Dorsolateral prefrontal cortex (tissue), 120 donors: ENCODE measurements at regions of chr19 and their contacts with region 1.

Region 1: DNA sequence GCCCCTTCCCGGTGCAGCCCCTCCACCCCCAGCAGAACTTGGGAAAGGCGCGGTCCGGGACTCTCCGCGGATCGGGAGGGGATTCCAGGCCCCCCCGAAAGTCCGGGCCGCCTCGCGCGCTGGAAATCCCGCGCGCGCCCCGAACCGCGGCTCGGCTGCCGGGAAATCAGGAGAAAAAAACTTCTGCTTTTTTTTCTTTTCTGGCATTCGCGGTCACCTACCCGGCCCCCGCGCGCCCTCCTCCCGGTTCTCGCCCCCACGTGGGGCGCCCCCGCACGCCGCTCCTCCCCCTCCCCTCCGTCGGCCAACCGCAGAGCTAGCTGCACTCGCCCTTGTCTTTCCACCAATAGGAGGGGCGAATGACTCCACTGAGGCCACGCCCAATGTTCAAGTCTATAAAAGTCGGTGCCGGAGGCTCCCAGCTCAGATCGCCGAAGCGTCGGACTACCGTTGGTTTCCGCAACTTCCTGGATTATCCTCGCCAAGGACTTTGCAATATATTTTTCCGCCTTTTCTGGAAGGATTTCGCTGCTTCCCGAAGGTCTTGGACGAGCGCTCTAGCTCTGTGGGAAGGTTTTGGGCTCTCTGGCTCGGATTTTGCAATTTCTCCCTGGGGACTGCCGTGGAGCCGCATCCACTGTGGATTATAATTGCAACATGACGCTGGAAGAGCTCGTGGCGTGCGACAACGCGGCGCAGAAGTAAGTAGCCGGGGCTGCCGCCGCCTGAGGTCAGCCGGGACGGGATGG is at the start of gene GADD45B:
- DNase-seq: peak; percentile 92 to 99 (median 97)
- H3K4me3 ChIP-seq: peak within 1 kb of the TSS; percentile 57 to 97 (median 84)
- H3K27ac ChIP-seq: peak within 1 kb of the TSS; percentile 34 to 95 (median 86)
- H3K27me3 ChIP-seq: no peaks in the 10 kb centered on the region
- CTCF ChIP-seq: peak in 12 of 56 donors; percentile 5 to 38 (median 19)
- total RNA-seq, gene GADD45B: 15.8 to 333 (median 47.4) TPM

Region 2: GRCh38 chr19:2494444-2495129 is 18.7 kb after region 1 on chr19:
- intact Hi-C with region 1: loop called in 1 of 2 experiments (anchors 2 kb)
- DNase-seq: peak in 8 of 10 donors; percentile 42 to 83 (median 72)
- H3K4me3 ChIP-seq: peak overlapping the region; percentile 33 to 85 (median 68)
- H3K27ac ChIP-seq: peak overlapping the region in 55 of 59 donors; percentile 15 to 89 (median 75)
- H3K27me3 ChIP-seq: peaks cover 0 to 3% (median 0%) of the 10 kb centered on the region in 45 donors
- CTCF ChIP-seq: peak in 6 of 56 donors; percentile 9 to 22 (median 12)

Region 3: DNA sequence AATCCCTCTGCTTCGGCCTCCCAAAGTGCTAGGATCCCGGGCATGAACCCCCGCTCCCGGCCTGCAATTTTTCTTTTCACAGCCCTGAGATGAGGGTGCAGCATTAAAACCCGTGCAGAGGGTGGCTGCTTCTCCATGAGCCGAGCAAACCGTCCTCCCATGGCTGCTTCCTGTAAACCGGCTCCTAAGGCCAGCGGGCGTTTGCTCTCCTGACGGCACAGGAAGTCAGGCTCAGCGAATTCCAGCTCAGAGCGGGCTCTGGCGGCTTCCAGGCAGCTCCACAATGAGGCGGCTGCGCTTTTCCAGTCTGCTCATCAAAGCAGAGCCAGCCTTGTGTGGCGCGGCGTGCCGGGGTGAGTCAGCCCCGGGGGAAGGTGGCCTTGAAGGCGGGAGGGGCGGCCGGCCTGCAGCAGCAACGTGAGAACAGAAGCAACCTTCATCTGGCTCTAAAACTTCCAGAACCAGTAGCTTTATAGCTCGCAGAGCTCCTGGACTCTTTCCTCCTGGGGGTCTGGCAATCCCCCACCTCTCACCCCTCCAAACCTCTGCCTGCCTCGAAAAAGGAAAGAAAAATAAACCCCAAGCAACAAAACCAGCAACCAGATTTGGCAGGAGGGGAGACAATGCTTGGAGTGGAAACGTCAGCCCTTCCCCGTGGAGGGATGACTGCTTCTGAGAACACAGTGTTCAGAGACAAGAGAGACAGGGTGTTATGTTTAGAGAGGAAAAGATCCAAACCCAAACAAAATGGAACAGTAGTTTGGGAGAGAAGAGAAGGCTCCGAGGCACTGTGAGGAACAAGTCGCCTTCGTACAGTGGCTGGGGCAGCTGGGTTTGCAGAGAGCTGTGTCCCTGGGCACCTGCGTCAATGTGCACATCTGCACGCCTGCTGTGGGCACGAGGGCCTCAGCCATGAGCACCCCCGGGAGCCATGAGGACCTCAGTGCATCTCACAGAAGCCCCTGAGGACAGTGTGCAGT is 67.9 kb after region 1 on chr19:
- intact Hi-C with region 1: loop called (anchors 2 kb)
- DNase-seq: peak; percentile 83 to 97 (median 94)
- H3K4me3 ChIP-seq: peak overlapping the region in 55 of 59 donors; percentile 2 to 58 (median 37)
- H3K27ac ChIP-seq: peak overlapping the region; percentile 89 to 100 (median 98)
- H3K27me3 ChIP-seq: no peaks in the 10 kb centered on the region
- CTCF ChIP-seq: peak in 38 of 56 donors; percentile 3 to 56 (median 33)

Region 4: GRCh38 chr19:2578901-2579677 is 103.2 kb after region 1 on chr19:
- intact Hi-C with region 1: loop called (anchors 1 to 10 kb)
- DNase-seq: peak; percentile 78 to 88 (median 85)
- H3K4me3 ChIP-seq: peak overlapping the region; percentile 34 to 74 (median 60)
- H3K27ac ChIP-seq: peak overlapping the region in 57 of 59 donors; percentile 14 to 88 (median 74)
- H3K27me3 ChIP-seq: no peaks in the 10 kb centered on the region
- CTCF ChIP-seq: peak; percentile 77 to 97 (median 91)

Region 5: DNA sequence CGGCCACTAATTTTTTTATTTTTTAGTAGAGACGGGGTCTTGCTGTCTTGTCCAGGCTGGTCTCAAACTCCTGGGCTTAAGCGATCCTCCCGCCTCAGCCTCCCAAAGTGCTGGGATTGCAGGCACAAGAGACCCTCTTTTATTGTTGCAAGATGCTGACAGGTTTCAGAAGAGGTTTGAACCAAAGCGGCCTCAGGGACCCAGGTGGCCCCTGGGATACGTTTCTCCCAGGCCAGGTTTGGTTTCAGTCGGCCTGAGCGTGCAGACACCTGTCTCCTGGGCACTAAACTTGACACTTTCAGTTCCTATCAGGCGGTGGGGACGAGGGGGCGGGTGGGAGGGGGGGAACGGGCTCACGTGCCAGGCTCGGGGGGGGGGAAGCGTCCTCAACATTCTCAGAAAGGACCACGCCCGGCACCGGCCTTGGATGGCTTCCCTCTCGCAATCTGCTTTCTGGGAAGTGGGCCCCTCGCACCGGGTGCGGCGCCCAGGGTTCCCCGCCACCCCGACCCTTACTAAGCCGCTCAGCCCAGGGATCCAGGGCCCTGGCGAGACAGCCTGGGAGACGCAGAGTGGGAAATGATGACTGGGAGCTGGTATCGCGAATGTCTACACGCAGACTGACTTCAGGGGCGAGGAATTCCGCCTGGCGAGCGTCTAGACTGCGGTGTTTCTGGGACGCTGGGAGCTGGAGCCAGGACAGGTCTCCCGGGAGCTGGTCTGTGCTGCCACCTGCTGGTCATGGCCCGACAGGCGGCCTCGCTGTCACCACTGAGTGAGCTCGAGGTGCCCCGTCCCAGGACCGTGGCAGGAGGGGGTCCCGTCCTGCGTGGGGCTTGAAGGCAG is 135.0 kb after region 1 on chr19:
- intact Hi-C with region 1: loop called (anchors 1 to 2 kb)
- DNase-seq: peak; percentile 85 to 93 (median 92)
- H3K4me3 ChIP-seq: peak overlapping the region in 58 of 59 donors; percentile 28 to 71 (median 53)
- H3K27ac ChIP-seq: peak overlapping the region in 40 of 59 donors; percentile 2 to 84 (median 56)
- H3K27me3 ChIP-seq: no peaks in the 10 kb centered on the region
- CTCF ChIP-seq: peak; percentile 94 to 100 (median 98)

Region 6: DNA sequence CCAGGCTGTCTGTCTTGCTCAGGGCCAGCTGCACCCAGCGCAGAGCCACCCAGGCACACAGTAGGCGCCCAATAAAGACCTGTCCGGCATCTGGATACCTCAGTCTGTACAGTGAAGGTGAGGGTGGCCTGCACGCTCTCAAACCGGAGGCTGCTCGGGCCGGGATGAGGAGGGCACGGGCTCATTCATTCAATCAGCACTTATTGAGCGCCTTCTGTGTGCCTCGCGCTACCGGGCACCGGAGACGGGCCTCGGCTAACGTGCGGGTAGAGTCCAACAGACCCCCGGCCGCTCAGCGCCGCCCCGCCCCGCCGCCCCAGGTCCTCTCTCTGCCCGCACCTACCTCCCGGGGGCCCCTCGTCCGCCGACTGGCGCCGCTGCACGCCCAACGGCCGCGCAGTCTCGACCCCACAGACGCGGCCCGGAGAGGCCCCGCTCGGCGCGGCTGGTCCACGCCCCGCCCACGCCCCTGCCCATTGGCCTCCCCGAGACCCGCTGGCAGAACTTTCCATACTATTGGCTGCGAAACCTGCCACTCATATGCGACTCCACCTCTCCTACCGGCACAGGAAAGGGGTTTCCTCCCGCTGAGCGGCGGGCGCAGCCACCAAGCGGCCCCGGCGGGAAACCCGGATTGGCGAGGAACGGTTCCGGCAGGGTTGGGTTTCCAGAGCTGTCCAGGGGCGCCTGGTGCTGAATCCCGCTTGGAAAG is 263.9 kb after region 1 on chr19 and contains the start of gene SLC39A3:
- intact Hi-C with region 1: loop called in 1 of 2 experiments (anchors 10 kb)
- DNase-seq: peak; percentile 96 to 99 (median 98)
- H3K4me3 ChIP-seq: peak within 1 kb of the TSS; percentile 63 to 100 (median 95)
- H3K27ac ChIP-seq: peak within 1 kb of the TSS in 49 of 59 donors; percentile 1 to 84 (median 62)
- H3K27me3 ChIP-seq: no peaks in the 10 kb centered on the region
- CTCF ChIP-seq: peak in 48 of 56 donors; percentile 9 to 66 (median 43)
- total RNA-seq, gene SLC39A3: 22.3 to 60.9 (median 39.3) TPM